Aorta (tissue), 5 donors: ENCODE measurements at regions of chr20 and their contacts with region 1.

Region 1: DNA sequence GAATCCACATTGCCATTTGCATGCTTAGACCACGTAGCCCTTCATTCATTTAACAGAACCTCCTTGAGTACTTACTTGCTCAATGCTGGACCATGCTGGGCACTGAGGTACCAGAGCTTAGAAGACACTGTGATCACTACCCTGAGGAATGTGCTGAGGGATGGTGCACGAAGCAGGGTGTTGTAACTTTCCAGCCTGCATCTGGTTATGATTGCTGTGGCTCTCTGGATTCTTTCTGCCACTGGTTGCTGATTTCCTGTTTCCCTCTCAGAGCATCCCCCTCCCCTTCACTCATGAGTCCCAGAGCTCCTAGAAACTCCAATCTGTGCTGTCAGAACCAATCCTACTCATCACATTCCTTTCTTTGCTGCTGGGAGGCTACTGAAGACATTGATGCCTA is 537.4 kb downstream of the PTPRT start:
- DNase-seq: no peak
- ATAC-seq: no peak
- H3K4me3 ChIP-seq: no peak overlapping the region
- H3K27ac ChIP-seq: no peak overlapping the region
- H3K4me1 ChIP-seq: no peaks in the 10 kb centered on the region
- H3K27me3 ChIP-seq: no peaks in the 10 kb centered on the region

Region 2: GRCh38 chr20:42559665-42560064 is 92.6 kb before region 1 on chr20:
- intact Hi-C with region 1: no loop called
- DNase-seq: no peak
- ATAC-seq: no peak
- H3K4me3 ChIP-seq: no peak overlapping the region
- H3K27ac ChIP-seq: no peak overlapping the region
- H3K4me1 ChIP-seq: no peaks in the 10 kb centered on the region
- H3K27me3 ChIP-seq: no peaks in the 10 kb centered on the region

Region 3: GRCh38 chr20:42598581-42598980 is 53.7 kb before region 1 on chr20:
- intact Hi-C with region 1: loop called in 1 of 2 experiments (anchors 10 kb)
- DNase-seq: no peak
- ATAC-seq: no peak
- H3K4me3 ChIP-seq: no peak overlapping the region
- H3K27ac ChIP-seq: no peak overlapping the region
- H3K4me1 ChIP-seq: no peaks in the 10 kb centered on the region
- H3K27me3 ChIP-seq: peaks cover 0 to 2% of the 10 kb centered on the region in 2 donors

Region 4: DNA sequence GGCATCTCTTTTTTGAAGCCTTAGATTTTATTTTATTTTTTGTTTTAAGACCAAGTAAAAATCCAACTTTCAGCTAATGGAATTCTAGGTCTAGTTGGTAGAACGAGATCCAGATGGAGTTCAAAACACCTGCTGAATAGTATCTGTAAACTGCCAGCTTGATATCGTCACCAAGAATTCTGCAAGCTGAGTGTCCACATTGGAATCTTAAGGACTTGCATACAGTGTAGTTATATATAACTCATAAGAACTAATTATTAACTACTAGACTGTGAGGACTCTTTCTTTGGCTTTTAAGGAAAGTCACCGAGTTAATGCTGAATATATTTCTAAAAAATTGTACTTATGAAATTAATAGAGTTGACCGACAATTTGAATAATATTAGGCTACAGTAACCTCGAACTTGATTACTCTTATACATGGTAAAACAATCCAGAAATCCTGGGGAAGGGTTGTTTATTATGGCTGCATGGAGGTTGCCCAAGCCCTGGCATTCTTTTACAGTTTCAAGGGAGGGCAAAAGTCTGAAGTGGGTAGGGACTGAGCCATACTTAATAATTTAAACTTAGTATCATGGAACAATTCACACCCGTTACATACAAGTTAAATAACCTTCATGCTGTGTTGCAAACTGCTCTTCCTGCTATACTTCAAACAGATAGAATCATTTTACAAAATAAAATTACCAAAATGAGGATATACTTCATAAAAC is 16.4 kb before region 1 on chr20:
- intact Hi-C with region 1: no loop called
- DNase-seq: no peak
- ATAC-seq: no peak
- H3K4me3 ChIP-seq: no peak overlapping the region
- H3K27ac ChIP-seq: no peak overlapping the region
- H3K4me1 ChIP-seq: no peaks in the 10 kb centered on the region
- H3K27me3 ChIP-seq: no peaks in the 10 kb centered on the region